ENCODE measurements at regions of chrX and their contacts with region 1.

Region 1: DNA sequence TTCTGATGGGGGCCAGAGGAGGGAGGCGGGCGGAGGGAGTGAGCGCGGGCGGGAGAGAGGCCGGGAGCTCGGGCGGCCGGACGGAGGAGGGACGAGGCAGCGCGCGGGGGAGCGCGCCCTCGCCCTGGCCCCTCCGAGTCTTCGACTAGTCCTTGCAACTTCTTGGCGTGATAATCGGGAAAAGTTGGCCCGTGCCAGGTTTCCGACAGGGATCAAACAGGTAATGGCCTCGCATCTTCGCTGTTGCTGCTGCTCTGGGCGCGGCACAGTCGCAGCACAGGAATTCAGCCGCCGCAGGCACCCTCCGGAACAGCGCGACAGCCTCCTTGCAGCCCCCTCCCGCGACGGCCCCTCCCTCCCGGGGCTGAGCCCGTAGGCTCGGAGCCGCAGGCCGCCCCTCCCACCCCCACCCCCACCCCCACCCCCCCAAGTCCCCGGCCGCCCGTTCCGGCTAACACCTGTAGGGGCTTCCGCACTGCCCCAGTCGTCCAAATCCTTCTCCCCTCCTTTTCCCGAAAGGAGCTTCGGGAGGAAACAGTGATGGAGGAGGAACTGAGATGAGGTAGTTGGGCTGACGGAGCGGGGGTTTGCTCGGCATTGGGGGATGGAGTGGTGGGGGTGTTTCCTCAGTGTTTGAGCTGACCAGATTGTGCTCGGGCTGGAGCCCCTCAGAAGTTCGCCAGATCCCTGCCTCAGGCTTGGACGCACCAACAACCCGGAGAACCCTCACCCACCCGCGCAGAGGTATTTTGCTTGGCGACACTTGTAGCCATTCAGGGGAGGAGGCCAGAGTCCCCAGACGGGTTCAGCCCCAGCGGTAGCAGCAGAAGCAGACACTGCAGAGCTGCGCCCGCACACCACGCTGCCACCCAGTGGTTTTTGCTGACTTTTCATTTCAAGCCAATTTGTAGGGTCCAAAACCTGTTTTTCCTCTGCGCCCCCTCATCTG is at the start of gene FGF13:
- DNase-seq: peak; percentile 31
- H3K4me3 Mint-ChIP-seq: peak within 1 kb of the TSS; percentile 64
- H3K27ac Mint-ChIP-seq: no peak within 1 kb of the TSS
- H3K4me1 Mint-ChIP-seq: no peaks in the 10 kb centered on the region
- H3K27me3 Mint-ChIP-seq: peaks cover 40% of the 10 kb centered on the region
- CTCF ChIP-seq: peak; percentile 19
- total RNA-seq, gene FGF13: 0.75 and 2.7 TPM in 2 replicates

Region 2: GRCh38 chrX:138191998-138192397 is 519.7 kb before region 1 on chrX:
- CTCF ChIA-PET with region 1: interaction called, 21 read pairs
- POLR2A ChIA-PET with region 1: no interaction called
- intact Hi-C with region 1: no loop called
- DNase-seq: peak; percentile 43
- H3K4me3 Mint-ChIP-seq: no peak overlapping the region
- H3K27ac Mint-ChIP-seq: no peak overlapping the region
- H3K4me1 Mint-ChIP-seq: no peaks in the 10 kb centered on the region
- H3K27me3 Mint-ChIP-seq: peaks cover 19% of the 10 kb centered on the region
- CTCF ChIP-seq: peak; percentile 48

Region 3: DNA sequence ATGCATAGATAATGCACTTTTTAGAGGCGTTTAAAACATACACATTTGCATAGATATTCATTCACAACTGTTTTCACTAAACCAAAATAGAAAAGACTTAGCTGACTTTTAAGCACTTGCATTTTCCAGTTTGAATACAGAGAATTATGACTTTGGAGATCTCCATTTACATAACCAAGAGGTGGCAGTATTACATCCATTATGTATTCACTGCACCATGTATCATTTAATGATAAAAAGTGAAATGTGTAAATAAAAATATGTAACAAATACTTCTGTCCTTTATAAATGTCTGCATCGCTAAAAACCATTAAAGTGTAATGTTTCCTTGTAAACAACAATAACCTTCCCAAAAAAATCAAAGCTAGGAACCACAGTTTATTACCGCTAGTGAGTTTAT is 413.4 kb before region 1 on chrX:
- CTCF ChIA-PET with region 1: interaction called, 21 read pairs
- POLR2A ChIA-PET with region 1: no interaction called
- intact Hi-C with region 1: no loop called
- DNase-seq: peak; percentile 1
- H3K4me3 Mint-ChIP-seq: no peak overlapping the region
- H3K27ac Mint-ChIP-seq: no peak overlapping the region
- H3K4me1 Mint-ChIP-seq: no peaks in the 10 kb centered on the region
- H3K27me3 Mint-ChIP-seq: no peaks in the 10 kb centered on the region
- CTCF ChIP-seq: no peak

Region 4: DNA sequence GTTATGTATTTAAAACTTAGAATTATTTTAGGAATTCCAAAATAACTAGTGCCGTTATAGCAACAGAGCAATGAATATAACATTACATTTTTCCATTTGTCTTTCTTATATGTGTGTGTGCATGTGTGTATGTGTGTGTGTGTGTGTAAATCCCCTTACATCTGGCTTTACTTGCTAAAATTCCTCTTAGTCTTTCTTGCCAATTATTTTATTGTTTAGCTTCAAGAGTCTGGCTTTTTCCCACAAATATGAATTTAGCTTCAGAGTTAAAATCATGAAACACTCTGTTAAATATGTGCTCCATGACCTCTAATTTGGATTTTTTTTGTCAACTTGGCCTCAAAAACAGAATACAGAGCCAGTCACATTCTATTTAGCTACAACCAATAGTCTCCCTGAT is 19.1 kb before region 1 on chrX:
- CTCF ChIA-PET with region 1: no interaction called
- POLR2A ChIA-PET with region 1: no interaction called
- intact Hi-C with region 1: no loop called
- DNase-seq: no peak
- H3K4me3 Mint-ChIP-seq: no peak overlapping the region
- H3K27ac Mint-ChIP-seq: no peak overlapping the region
- H3K4me1 Mint-ChIP-seq: no peaks in the 10 kb centered on the region
- H3K27me3 Mint-ChIP-seq: no peaks in the 10 kb centered on the region
- CTCF ChIP-seq: no peak